ENCODE measurements at regions of chr14 and their contacts with region 1.

Region 1: GRCh38 chr14:99821519-99822508 is 28.6 kb downstream of the EML1 start:
- DNase-seq: no peak
- H3K4me3 ChIP-seq: no peak overlapping the region
- H3K27ac ChIP-seq: no peak overlapping the region
- H3K4me1 ChIP-seq: peaks cover 3 to 17% (median 9%) of the 10 kb centered on the region in 4 experiments; a peak in 5 of 7 replicates
- H3K27me3 ChIP-seq: no peaks in the 10 kb centered on the region
- CTCF ChIP-seq: no peak
- EP300 ChIP-seq: no peak
- POLR2A ChIP-seq: no peak
- RAD21 ChIP-seq: no peak

Region 2: GRCh38 chr14:99807413-99808153 is 14.2 kb before region 1 on chr14:
- CTCF ChIA-PET with region 1: interaction called, 16 read pairs
- POLR2A ChIA-PET with region 1: interaction called, 3 read pairs
- DNase-seq: no peak
- H3K4me3 ChIP-seq: no peak overlapping the region
- H3K27ac ChIP-seq: no peak overlapping the region
- H3K4me1 ChIP-seq: no peaks in the 10 kb centered on the region; a peak in 1 of 7 replicates
- H3K27me3 ChIP-seq: no peaks in the 10 kb centered on the region
- CTCF ChIP-seq: peak; percentile 59 to 93 (median 68)
- EP300 ChIP-seq: no peak
- POLR2A ChIP-seq: no peak
- RAD21 ChIP-seq: peak in 1 of 2 experiments; percentile 50; a peak in 3 of 4 replicates

Region 3: DNA sequence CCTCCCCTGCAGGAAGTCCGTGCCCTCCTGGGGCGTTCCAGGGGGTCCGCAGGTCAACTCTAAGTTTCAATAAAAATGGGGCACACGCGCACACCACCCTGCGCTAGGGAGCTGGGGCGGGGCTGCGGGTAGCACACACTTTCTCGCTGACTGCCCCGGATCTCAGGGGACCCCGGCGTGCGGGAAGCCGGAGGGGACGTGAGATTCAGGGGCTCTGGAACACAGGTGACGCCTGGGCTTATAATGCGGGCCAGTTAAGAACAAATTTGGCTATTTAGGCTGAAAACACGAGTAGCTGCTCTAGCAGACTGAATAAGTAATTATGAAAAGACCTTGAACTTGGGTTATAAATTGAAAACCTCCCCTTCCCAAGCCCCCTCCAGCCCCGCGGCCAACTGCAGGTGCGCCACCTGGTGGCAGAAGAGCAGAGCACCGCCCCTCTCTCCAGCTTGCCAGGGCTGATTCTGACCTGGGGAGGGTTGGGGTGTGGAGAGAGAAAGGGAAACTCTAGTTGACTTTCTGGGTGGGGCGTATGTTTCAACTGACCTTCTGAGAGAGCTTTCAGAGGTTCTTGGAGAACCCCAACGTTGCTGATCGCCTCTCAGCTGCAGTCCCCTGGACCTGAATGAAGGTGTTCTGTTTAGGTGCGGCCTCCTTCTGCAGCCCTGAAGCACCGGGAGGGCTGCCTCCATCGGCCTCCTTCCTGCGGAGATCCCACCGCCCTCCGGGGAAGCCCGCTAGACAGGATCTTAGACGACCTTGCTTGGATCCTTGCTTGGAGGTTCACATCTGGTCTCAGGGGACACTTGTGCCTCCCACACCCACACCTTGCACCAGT is 125.1 kb after region 1 on chr14:
- CTCF ChIA-PET with region 1: no interaction called
- POLR2A ChIA-PET with region 1: no interaction called
- DNase-seq: peak in 1 of 2 experiments; percentile 88
- H3K4me3 ChIP-seq: peak overlapping the region; percentile 14 to 55 (median 21); a peak in 5 of 8 replicates
- H3K27ac ChIP-seq: no peak overlapping the region
- H3K4me1 ChIP-seq: peaks cover 0 to 22% (median 4%) of the 10 kb centered on the region in 4 experiments; a peak in 5 of 7 replicates
- H3K27me3 ChIP-seq: 0 out of 7 replicates have a peak, but pooled peaks cover 0 to 3% (median 0%) of the 10 kb centered on the region in 4 experiments
- CTCF ChIP-seq: peak; percentile 83 to 96 (median 90)
- EP300 ChIP-seq: no peak
- POLR2A ChIP-seq: no peak
- RAD21 ChIP-seq: peak; percentile 52 to 70